ENCODE measurements at regions of chr12 and their contacts with region 1.

Region 1: DNA sequence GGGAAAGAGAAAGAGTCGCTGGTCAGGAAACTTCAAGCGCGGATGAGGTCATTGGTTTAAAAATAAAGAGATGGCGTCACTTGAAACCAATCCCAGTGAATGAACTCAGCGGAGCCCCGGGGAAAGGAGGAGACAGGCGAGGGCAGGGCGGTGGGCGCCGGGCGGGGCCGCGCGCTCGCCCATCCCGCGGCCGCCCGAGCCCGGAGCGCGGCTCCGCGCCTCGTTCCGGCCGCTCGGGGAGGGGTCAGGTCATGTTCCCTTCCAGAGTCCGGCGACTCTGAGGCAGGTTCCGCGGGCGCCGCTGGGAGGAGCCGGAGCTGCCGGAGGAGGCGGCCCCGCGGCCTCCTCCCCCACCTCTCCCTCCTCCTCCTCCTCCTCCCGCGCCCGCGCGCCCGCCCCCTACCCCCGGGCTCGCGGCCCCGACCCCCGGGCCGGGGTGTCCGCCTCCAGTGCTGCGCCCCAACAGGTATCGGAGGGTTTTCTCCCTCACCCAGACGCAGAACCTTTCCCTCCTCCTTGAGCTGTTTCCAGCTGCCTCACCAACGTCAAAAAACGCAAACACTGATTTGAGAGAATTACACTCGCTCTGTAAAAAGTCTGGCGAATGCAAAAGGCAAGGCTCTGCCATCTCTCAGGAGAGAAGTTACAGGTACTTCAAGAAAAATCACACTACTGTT is at the start of gene DUSP16:
- DNase-seq: peak; percentile 52 to 95 (median 69)
- ATAC-seq: peak; percentile 62
- H3K4me3 ChIP-seq: peak within 1 kb of the TSS; percentile 88
- H3K4me3 Mint-ChIP-seq: peak within 1 kb of the TSS; percentile 99
- H3K27ac ChIP-seq: peak within 1 kb of the TSS; percentile 95 to 98
- H3K27ac Mint-ChIP-seq: peak within 1 kb of the TSS; percentile 99
- H3K4me1 ChIP-seq: peaks cover 19% of the 10 kb centered on the region
- H3K4me1 Mint-ChIP-seq: peaks cover 52% of the 10 kb centered on the region
- H3K27me3 ChIP-seq: no peaks in the 10 kb centered on the region
- H3K27me3 Mint-ChIP-seq: no peaks in the 10 kb centered on the region
- CTCF ChIP-seq: no peak
- total RNA-seq, gene DUSP16: 33.3 to 35.6 TPM

Region 2: DNA sequence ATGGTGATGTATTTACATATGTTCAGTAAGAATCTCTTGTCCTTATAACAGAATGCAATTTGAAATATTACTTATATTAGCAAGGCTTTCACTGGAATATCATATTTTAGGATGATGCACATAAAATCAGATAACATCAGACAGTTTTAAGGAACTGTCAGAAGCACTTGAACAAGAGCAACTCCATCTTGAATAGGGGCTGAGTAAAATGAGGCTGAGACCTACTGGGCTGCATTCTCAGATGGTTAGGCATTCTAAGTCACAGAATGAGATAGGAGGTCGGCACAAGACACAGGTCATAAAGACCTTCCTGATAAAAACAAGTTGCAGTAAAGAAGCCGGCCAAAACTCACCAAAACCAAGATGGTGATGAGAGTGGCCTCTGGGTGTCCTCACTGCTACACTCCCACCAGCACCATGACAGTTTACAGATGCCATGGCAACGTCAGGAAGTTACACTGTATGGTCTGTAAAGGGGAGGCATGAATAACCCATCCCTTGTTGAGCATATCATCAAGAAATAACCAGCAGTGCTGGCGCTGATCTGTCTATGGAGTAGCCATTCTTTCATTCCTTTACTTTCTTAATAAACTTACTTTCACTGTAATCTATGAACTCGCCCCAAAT is 940.8 kb before region 1 on chr12:
- CTCF ChIA-PET with region 1: no interaction called
- POLR2A ChIA-PET with region 1: no interaction called
- intact Hi-C with region 1: no loop called
- DNase-seq: peak in 10 of 14 experiments; percentile 6 to 57 (median 15)
- ATAC-seq: peak; percentile 34
- H3K4me3 ChIP-seq: no peak overlapping the region
- H3K4me3 Mint-ChIP-seq: no peak overlapping the region
- H3K27ac ChIP-seq: no peak overlapping the region
- H3K27ac Mint-ChIP-seq: no peak overlapping the region
- H3K4me1 ChIP-seq: no peaks in the 10 kb centered on the region
- H3K4me1 Mint-ChIP-seq: no peaks in the 10 kb centered on the region
- H3K27me3 ChIP-seq: no peaks in the 10 kb centered on the region
- H3K27me3 Mint-ChIP-seq: no peaks in the 10 kb centered on the region
- CTCF ChIP-seq: peak; percentile 37

Region 3: GRCh38 chr12:12376646-12377448 is 185.9 kb before region 1 on chr12:
- CTCF ChIA-PET with region 1: interaction called, 13 read pairs
- POLR2A ChIA-PET with region 1: interaction called, 35 read pairs
- intact Hi-C with region 1: loop called (anchors 1 kb)
- DNase-seq: peak in 6 of 14 experiments; percentile 15 to 88 (median 59)
- ATAC-seq: peak; percentile 47
- H3K4me3 ChIP-seq: no peak overlapping the region
- H3K4me3 Mint-ChIP-seq: no peak overlapping the region
- H3K27ac ChIP-seq: no peak overlapping the region
- H3K27ac Mint-ChIP-seq: peak overlapping the region; percentile 62
- H3K4me1 ChIP-seq: peaks cover 20% of the 10 kb centered on the region
- H3K4me1 Mint-ChIP-seq: peaks cover 49% of the 10 kb centered on the region
- H3K27me3 ChIP-seq: no peaks in the 10 kb centered on the region
- H3K27me3 Mint-ChIP-seq: no peaks in the 10 kb centered on the region
- CTCF ChIP-seq: peak; percentile 83

Region 4: GRCh38 chr12:12474931-12475795 is 87.6 kb before region 1 on chr12:
- CTCF ChIA-PET with region 1: interaction called, 3 read pairs
- POLR2A ChIA-PET with region 1: interaction called, 13 read pairs
- intact Hi-C with region 1: loop called (anchors 2 to 5 kb)
- DNase-seq: peak in 12 of 14 experiments; percentile 18 to 89 (median 44)
- ATAC-seq: peak; percentile 84
- H3K4me3 ChIP-seq: peak overlapping the region; percentile 38
- H3K4me3 Mint-ChIP-seq: peak overlapping the region; percentile 59
- H3K27ac ChIP-seq: peak overlapping the region; percentile 55 to 91
- H3K27ac Mint-ChIP-seq: peak overlapping the region; percentile 93
- H3K4me1 ChIP-seq: peaks cover 50% of the 10 kb centered on the region
- H3K4me1 Mint-ChIP-seq: peaks cover 57% of the 10 kb centered on the region
- H3K27me3 ChIP-seq: no peaks in the 10 kb centered on the region
- H3K27me3 Mint-ChIP-seq: no peaks in the 10 kb centered on the region
- CTCF ChIP-seq: no peak

Region 5: DNA sequence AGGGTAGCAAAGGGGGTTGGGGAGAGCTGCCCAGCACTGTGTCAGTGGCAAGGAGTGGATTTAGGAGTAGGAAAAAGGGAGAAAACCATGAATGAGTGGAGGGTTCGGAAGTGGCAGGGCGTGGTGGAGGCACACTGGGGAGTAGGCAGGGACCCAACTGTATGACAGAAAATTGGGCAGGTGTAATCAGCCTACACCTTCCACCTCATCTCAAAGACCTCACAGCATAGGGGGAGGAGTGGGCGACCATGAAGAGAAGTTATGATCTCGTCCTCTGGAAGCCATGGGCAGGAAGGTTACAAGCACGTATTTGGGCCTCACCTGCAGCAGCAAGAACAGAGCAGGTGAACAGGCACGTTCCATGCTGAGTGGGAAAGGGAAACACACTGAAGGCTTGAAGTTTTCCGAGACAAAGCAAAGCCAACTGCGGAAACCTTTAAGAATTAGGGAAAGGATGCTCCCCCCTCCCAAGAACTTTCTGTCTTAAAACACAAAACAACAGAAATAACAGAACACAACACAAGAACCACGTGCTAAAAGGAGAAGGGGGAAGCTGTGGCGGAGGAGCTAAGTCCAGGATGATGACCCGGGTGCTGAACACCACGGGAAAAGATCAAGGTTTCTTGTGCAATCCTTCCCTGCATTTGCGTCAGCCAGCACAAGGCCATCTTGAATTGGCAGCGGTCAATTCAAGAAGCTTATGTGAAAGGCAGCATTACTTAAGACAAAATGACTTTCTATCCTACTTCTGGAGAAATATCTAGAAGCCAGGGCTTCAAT is 37.7 kb after region 1 on chr12:
- CTCF ChIA-PET with region 1: no interaction called
- POLR2A ChIA-PET with region 1: no interaction called
- intact Hi-C with region 1: loop called in 1 of 2 experiments (anchors 5 kb)
- DNase-seq: peak in 1 of 14 experiments; percentile 25
- ATAC-seq: no peak
- H3K4me3 ChIP-seq: no peak overlapping the region
- H3K4me3 Mint-ChIP-seq: no peak overlapping the region
- H3K27ac ChIP-seq: no peak overlapping the region
- H3K27ac Mint-ChIP-seq: no peak overlapping the region
- H3K4me1 ChIP-seq: no peaks in the 10 kb centered on the region
- H3K4me1 Mint-ChIP-seq: no peaks in the 10 kb centered on the region
- H3K27me3 ChIP-seq: no peaks in the 10 kb centered on the region
- H3K27me3 Mint-ChIP-seq: no peaks in the 10 kb centered on the region
- CTCF ChIP-seq: no peak

Region 6: DNA sequence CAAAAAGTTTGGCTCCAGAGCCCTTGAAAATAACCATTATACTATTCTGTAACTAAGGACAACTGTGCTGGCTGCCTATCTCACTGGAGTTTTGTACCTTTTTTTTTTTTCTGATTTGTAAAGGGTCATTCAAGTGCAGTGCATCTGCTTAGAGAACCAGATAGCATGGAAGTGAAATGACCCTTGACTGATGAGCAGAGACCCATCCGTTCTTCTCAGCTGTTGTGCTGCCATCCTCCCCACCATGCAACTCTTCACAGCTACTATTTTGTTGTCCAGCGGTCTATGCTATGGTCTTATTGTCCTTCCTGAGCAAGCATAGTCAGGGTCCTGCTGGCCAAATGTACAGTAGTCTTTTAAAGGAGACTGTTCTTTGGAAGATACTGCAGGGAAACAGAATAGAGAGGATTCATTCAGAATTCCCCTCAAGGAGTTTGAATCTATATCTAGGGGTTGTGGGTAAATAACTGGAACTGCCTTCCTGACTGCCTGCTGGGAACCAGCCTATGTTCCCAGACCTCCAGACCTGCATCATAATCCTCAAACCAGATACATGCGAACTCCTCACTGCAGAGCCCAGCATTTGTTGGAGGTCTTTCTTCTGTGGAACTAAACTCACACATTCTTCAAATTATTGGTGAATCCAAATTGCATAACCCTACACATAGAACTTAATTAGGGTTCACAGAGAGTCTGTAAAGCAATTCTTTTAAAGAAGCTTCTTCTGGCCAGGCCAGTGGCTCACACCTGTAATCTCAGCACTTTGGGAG is 92.2 kb after region 1 on chr12:
- CTCF ChIA-PET with region 1: interaction called, 6 read pairs
- POLR2A ChIA-PET with region 1: interaction called, 4 read pairs
- intact Hi-C with region 1: loop called (anchors 2 to 5 kb)
- DNase-seq: no peak
- ATAC-seq: no peak
- H3K4me3 ChIP-seq: no peak overlapping the region
- H3K4me3 Mint-ChIP-seq: no peak overlapping the region
- H3K27ac ChIP-seq: no peak overlapping the region
- H3K27ac Mint-ChIP-seq: no peak overlapping the region
- H3K4me1 ChIP-seq: peaks cover 8% of the 10 kb centered on the region
- H3K4me1 Mint-ChIP-seq: peaks cover 17% of the 10 kb centered on the region
- H3K27me3 ChIP-seq: no peaks in the 10 kb centered on the region
- H3K27me3 Mint-ChIP-seq: no peaks in the 10 kb centered on the region
- CTCF ChIP-seq: no peak

Region 7: GRCh38 chr12:12716793-12717585 is 154.3 kb after region 1 on chr12 and contains the start of gene CDKN1B:
- CTCF ChIA-PET with region 1: no interaction called
- POLR2A ChIA-PET with region 1: interaction called, 33 read pairs
- intact Hi-C with region 1: loop called in 1 of 2 experiments (anchors 5 kb)
- DNase-seq: peak; percentile 75 to 95 (median 84)
- ATAC-seq: peak; percentile 56
- H3K4me3 ChIP-seq: peak within 1 kb of the TSS; percentile 97
- H3K4me3 Mint-ChIP-seq: peak within 1 kb of the TSS; percentile 99
- H3K27ac ChIP-seq: peak within 1 kb of the TSS; percentile 88 to 97
- H3K27ac Mint-ChIP-seq: peak within 1 kb of the TSS; percentile 95
- H3K4me1 ChIP-seq: peaks cover 38% of the 10 kb centered on the region
- H3K4me1 Mint-ChIP-seq: peaks cover 69% of the 10 kb centered on the region
- H3K27me3 ChIP-seq: no peaks in the 10 kb centered on the region
- H3K27me3 Mint-ChIP-seq: no peaks in the 10 kb centered on the region
- CTCF ChIP-seq: no peak
- total RNA-seq, gene CDKN1B: 352 TPM